GM12878 (cell line): ENCODE measurements at regions of chr1 and their contacts with region 1.

Region 1: DNA sequence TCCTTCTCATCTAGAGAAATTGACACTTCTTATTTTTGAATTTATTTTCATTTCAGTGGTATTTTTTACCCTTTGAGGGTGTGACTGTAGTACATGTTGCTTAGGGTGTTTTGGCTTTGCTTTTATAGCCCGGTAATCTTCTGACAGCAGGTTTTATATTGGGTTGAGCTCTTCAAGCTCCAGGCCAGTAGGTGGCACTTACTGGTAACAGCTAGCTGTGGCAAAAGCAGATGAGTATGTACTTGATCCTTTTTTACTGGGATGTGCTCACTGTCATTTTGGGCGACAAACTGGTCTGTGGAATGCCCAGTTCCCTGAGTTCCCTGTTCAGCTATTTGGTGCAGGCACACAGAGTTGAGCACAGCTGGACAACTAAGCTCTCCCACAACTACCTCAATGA is 916.2 kb upstream of the B3GALT2 start:
- DNase-seq: no peak
- ATAC-seq: peak; percentile 66
- H3K4me3 ChIP-seq: no peak overlapping the region
- H3K27ac ChIP-seq: no peak overlapping the region
- H3K4me1 ChIP-seq: no peaks in the 10 kb centered on the region
- H3K27me3 ChIP-seq: no peaks in the 10 kb centered on the region
- CTCF ChIP-seq: peak in 2 of 3 experiments; percentile 16 to 34; a peak in 4 of 6 replicates
- EP300 ChIP-seq: no peak
- POLR2A ChIP-seq: no peak
- RAD21 ChIP-seq: peak; percentile 42

Region 2: DNA sequence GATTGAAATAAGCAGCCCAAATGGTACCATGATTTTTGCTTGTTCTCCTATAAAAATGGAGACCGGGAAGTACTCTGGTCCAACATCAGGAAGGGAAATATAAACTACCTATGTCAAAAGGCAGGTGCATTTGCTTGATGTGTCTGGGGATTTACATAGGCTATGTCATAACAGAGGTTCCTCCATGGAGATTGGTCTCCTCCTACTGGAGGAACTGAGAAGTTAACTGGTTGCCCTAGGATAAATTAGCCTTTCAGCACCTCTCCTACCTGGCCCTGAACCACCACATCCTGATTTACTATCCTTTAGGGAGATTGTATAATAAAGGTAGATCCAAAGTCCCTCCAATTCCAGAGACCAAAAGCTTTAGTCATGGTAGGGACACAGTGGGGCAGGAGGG is 193.1 kb after region 1 on chr1:
- CTCF ChIA-PET with region 1: interaction called, 4 read pairs
- POLR2A ChIA-PET with region 1: no interaction called
- RAD21 ChIA-PET with region 1: no interaction called
- SMC1A ChIA-PET with region 1: no interaction called
- in situ Hi-C with region 1: no loop called
- intact Hi-C with region 1: loop called (anchors 2 kb)
- DNase-seq: no peak
- ATAC-seq: peak; percentile 94
- H3K4me3 ChIP-seq: no peak overlapping the region
- H3K27ac ChIP-seq: no peak overlapping the region
- H3K4me1 ChIP-seq: no peaks in the 10 kb centered on the region
- H3K27me3 ChIP-seq: no peaks in the 10 kb centered on the region
- CTCF ChIP-seq: peak; percentile 66 to 75 (median 70)
- EP300 ChIP-seq: no peak
- POLR2A ChIP-seq: no peak
- RAD21 ChIP-seq: peak; percentile 88